CD4-positive, alpha-beta T cell (primary cell): ENCODE measurements at regions of chr11 and their contacts with region 1.

Region 1: DNA sequence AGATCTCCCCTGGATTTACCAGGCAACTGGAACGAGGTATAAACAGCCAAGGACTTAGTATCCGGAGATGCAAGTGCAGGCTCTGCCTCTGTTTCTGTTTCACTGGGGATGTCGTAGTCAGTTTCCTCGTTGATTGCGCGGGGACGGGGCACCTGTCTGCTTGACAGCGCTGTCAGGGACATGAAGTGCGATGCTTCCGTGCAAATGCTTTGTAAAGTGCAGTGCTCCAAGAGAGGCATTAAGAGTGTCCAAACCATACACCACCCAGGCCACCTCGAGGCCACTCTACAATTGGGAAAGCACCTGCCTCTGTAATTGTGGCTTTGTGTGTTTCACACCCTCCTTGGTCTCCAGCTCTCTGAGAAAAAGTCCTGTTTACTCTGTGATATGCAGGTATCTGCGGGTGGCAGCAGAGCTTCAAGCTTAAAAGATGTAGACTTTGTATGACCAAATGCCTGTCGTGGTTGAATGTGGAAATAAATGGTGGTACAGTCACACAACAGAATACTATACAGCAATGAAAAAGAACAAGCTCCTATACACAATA is 18.6 kb upstream of the CD5 start:
- DNase-seq: peak; percentile 56 to 92 (median 68)
- ATAC-seq: peak; percentile 67
- H3K4me3 ChIP-seq: peak overlapping the region; percentile 53
- H3K4me3 Mint-ChIP-seq: peak overlapping the region; percentile 89
- H3K27ac ChIP-seq: peak overlapping the region; percentile 90 to 94
- H3K27ac Mint-ChIP-seq: peak overlapping the region; percentile 98
- H3K4me1 ChIP-seq: peaks cover 54% of the 10 kb centered on the region
- H3K4me1 Mint-ChIP-seq: peaks cover 66% of the 10 kb centered on the region
- H3K27me3 ChIP-seq: no peaks in the 10 kb centered on the region
- H3K27me3 Mint-ChIP-seq: no peaks in the 10 kb centered on the region
- CTCF ChIP-seq: peak; percentile 36

Region 2: DNA sequence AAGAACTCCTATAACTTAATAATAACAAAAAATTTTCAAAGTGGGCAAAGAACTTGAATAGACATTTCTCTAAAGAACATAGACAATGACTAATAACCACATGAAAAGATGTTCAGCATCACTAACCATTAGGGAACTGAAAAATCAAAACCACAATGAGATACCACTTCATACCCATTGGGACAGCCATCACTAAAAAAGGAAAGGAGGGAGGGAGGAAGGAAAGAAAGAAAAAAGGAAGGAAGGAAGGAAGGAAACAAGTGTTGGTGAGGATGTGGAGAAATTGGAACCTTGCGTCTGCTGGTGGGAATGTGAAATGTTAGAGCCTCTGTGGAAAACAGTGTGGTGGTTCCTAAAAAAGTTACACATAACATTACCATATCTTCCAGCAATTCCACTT is 512.7 kb before region 1 on chr11:
- CTCF ChIA-PET with region 1: no interaction called
- POLR2A ChIA-PET with region 1: no interaction called
- intact Hi-C with region 1: no loop called
- DNase-seq: no peak
- ATAC-seq: no peak
- H3K4me3 ChIP-seq: no peak overlapping the region
- H3K4me3 Mint-ChIP-seq: no peak overlapping the region
- H3K27ac ChIP-seq: no peak overlapping the region
- H3K27ac Mint-ChIP-seq: no peak overlapping the region
- H3K4me1 ChIP-seq: no peaks in the 10 kb centered on the region
- H3K4me1 Mint-ChIP-seq: no peaks in the 10 kb centered on the region
- H3K27me3 ChIP-seq: peaks cover 0 to 8% of the 10 kb centered on the region in 2 experiments
- H3K27me3 Mint-ChIP-seq: peaks cover 12% of the 10 kb centered on the region
- CTCF ChIP-seq: no peak

Region 3: DNA sequence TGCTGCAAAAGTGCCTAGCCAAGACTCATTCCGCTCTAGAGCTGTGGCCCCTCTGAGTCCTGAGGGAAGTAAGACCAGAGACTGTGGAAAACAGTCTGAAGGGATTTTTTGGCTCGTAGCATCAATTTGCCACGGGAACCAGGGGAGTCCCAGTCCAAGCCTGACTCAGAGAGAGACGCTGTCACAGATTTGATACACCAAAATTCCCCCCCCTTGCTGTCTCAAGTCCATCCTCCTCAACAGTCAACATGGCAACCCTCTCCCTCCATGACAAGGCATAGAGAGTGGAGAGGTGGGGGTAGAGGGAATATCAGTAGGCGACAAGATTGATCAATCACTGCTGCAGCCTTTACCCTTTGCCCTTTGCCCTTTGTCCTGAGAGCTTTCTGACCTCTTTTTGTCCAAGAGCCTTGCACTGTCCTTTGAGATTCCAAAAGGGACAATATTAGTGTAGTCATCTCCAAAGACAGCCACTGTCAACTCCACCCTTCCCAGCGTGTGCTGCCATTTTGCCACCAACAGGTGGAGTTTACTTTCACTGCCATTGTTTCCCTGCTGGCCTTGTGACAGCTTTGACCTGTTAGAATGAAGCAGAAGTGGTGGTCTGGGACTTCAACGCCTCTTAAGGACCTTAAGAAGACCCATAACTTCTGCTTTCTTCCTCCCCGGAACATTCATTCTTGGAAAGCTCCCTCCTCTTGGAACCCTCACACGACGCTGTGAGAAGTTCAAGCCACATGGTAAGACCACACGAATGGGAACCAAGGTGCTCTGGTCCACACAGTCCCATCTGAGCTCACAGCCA is 139.0 kb before region 1 on chr11:
- CTCF ChIA-PET with region 1: no interaction called
- POLR2A ChIA-PET with region 1: no interaction called
- intact Hi-C with region 1: no loop called
- DNase-seq: peak in 2 of 14 experiments; percentile 45 to 48
- ATAC-seq: no peak
- H3K4me3 ChIP-seq: no peak overlapping the region
- H3K4me3 Mint-ChIP-seq: no peak overlapping the region
- H3K27ac ChIP-seq: no peak overlapping the region
- H3K27ac Mint-ChIP-seq: peak overlapping the region; percentile 17
- H3K4me1 ChIP-seq: no peaks in the 10 kb centered on the region
- H3K4me1 Mint-ChIP-seq: no peaks in the 10 kb centered on the region
- H3K27me3 ChIP-seq: peaks cover 0 to 4% of the 10 kb centered on the region in 2 experiments
- H3K27me3 Mint-ChIP-seq: no peaks in the 10 kb centered on the region
- CTCF ChIP-seq: peak; percentile 24

Region 4: GRCh38 chr11:60978546-60979380 is 104.9 kb before region 1 on chr11:
- CTCF ChIA-PET with region 1: no interaction called
- POLR2A ChIA-PET with region 1: interaction called, 22 read pairs
- intact Hi-C with region 1: no loop called
- DNase-seq: peak in 5 of 14 experiments; percentile 37 to 76 (median 71)
- ATAC-seq: peak; percentile 15
- H3K4me3 ChIP-seq: peak overlapping the region; percentile 27
- H3K4me3 Mint-ChIP-seq: peak overlapping the region; percentile 91
- H3K27ac ChIP-seq: peak overlapping the region; percentile 75 to 95
- H3K27ac Mint-ChIP-seq: peak overlapping the region; percentile 94
- H3K4me1 ChIP-seq: peaks cover 87% of the 10 kb centered on the region
- H3K4me1 Mint-ChIP-seq: peaks cover 87% of the 10 kb centered on the region
- H3K27me3 ChIP-seq: no peaks in the 10 kb centered on the region
- H3K27me3 Mint-ChIP-seq: no peaks in the 10 kb centered on the region
- CTCF ChIP-seq: no peak

Region 5: DNA sequence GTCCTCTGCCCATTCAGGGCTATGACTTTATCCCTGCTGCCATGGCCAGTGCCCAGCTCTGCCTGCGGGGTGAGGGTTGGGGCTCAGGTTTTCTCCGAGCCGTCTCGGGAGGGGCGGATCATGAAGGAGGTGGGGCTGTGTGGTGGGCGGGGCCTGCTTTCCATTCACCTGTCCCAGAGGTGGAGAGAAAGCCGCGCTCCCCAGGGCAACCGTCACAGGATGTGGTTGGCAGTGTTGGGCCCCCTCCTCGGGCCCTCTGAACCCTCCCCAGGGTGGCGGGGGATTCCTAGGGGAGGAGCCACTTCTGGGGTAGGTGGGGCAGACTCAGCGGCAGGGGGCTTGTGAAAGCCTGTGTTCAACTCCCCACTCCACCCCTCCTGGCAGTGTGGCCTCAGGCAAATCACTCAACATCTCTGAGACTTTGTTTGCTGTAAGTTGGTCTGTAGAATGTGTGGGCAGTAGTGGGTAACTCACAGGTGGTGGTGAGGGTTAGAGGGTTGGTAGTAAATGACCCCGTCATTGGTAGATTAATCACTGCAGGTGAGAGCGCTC is 61.9 kb before region 1 on chr11:
- CTCF ChIA-PET with region 1: interaction called, 4 read pairs
- POLR2A ChIA-PET with region 1: interaction called, 41 read pairs
- intact Hi-C with region 1: loop called (anchors 2 kb)
- DNase-seq: peak; percentile 82 to 97 (median 92)
- ATAC-seq: peak; percentile 71
- H3K4me3 ChIP-seq: peak overlapping the region; percentile 21
- H3K4me3 Mint-ChIP-seq: peak overlapping the region; percentile 87
- H3K27ac ChIP-seq: peak overlapping the region; percentile 81 to 88
- H3K27ac Mint-ChIP-seq: peak overlapping the region; percentile 99
- H3K4me1 ChIP-seq: peaks cover 85% of the 10 kb centered on the region
- H3K4me1 Mint-ChIP-seq: peaks cover 85% of the 10 kb centered on the region
- H3K27me3 ChIP-seq: no peaks in the 10 kb centered on the region
- H3K27me3 Mint-ChIP-seq: no peaks in the 10 kb centered on the region
- CTCF ChIP-seq: no peak

Region 6: DNA sequence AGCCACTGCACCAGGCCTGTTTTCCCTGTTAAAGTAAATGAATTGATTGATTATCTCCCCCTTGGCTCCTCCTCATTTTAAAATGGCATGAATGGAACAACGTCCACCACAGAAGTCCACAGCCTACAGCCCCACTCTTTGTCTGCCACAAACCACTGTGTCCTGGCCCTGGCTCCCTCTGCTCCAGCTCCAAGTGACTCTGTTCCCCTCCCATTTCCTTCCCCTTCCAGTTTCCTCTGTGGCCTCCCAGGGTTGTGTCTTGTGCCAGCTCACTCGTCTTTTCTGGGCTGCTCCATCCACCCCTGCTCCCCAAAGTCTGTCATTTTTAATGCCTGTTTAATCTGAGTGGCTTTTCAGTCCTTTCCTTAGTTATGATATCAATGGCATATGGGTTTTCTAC is 33.8 kb before region 1 on chr11:
- CTCF ChIA-PET with region 1: no interaction called
- POLR2A ChIA-PET with region 1: interaction called, 237 read pairs
- intact Hi-C with region 1: no loop called
- DNase-seq: no peak
- ATAC-seq: no peak
- H3K4me3 ChIP-seq: no peak overlapping the region
- H3K4me3 Mint-ChIP-seq: no peak overlapping the region
- H3K27ac ChIP-seq: no peak overlapping the region
- H3K27ac Mint-ChIP-seq: peak overlapping the region; percentile 81
- H3K4me1 ChIP-seq: peaks cover 44% of the 10 kb centered on the region
- H3K4me1 Mint-ChIP-seq: peaks cover 76% of the 10 kb centered on the region
- H3K27me3 ChIP-seq: no peaks in the 10 kb centered on the region
- H3K27me3 Mint-ChIP-seq: no peaks in the 10 kb centered on the region
- CTCF ChIP-seq: no peak

Region 7: GRCh38 chr11:61102667-61103571 is 19.2 kb after region 1 on chr11:
- CTCF ChIA-PET with region 1: interaction called, 4 read pairs
- POLR2A ChIA-PET with region 1: interaction called, 48 read pairs
- intact Hi-C with region 1: loop called in 1 of 2 experiments (anchors 2 kb)
- DNase-seq: peak in 4 of 14 experiments; percentile 47 to 78 (median 55)
- ATAC-seq: peak; percentile 22
- H3K4me3 ChIP-seq: peak overlapping the region; percentile 100
- H3K4me3 Mint-ChIP-seq: no peak overlapping the region
- H3K27ac ChIP-seq: peak overlapping the region; percentile 95 to 96
- H3K27ac Mint-ChIP-seq: no peak overlapping the region
- H3K4me1 ChIP-seq: peaks cover 58% of the 10 kb centered on the region
- H3K4me1 Mint-ChIP-seq: peaks cover 45% of the 10 kb centered on the region
- H3K27me3 ChIP-seq: no peaks in the 10 kb centered on the region
- H3K27me3 Mint-ChIP-seq: no peaks in the 10 kb centered on the region
- CTCF ChIP-seq: no peak

Region 8: GRCh38 chr11:61120706-61121191 is 37.1 kb after region 1 on chr11:
- CTCF ChIA-PET with region 1: no interaction called
- POLR2A ChIA-PET with region 1: interaction called, 116 read pairs
- intact Hi-C with region 1: no loop called
- DNase-seq: peak; percentile 43 to 92 (median 52)
- ATAC-seq: peak; percentile 86
- H3K4me3 ChIP-seq: no peak overlapping the region
- H3K4me3 Mint-ChIP-seq: peak overlapping the region; percentile 87
- H3K27ac ChIP-seq: peak overlapping the region; percentile 64 to 74
- H3K27ac Mint-ChIP-seq: peak overlapping the region; percentile 95
- H3K4me1 ChIP-seq: peaks cover 67% of the 10 kb centered on the region
- H3K4me1 Mint-ChIP-seq: peaks cover 72% of the 10 kb centered on the region
- H3K27me3 ChIP-seq: no peaks in the 10 kb centered on the region
- H3K27me3 Mint-ChIP-seq: no peaks in the 10 kb centered on the region
- CTCF ChIP-seq: no peak

Region 9: DNA sequence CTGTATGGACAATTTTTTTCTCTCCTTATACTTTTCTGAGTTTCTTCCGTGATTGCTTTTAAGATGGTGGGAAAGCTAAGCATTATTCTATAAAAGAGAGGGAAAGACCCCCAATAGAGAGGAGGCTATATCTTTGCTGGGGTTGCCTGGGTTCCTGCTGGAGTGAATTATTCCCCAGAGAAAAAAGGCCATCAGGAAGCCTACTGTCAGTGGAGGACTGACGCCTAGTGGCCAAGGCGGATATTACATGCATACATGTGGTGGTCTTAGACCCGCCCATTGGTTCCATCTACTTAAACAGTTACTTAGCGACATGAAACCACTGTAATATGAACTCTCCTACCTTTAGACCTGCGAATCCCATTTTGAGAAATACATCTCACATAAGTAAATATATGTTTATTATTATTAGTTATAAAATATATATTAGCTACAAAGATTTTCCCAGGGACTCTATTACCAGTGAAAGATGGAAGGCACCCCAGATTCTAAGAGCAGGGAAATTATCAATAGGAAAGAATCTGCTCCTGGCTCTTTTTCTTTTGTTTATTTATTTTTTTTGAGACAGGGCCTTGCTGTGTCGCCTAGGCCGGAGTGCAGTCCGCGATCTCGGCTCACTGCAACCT is 103.9 kb after region 1 on chr11:
- CTCF ChIA-PET with region 1: interaction called, 3 read pairs
- POLR2A ChIA-PET with region 1: no interaction called
- intact Hi-C with region 1: loop called in 1 of 2 experiments (anchors 5 kb)
- DNase-seq: peak; percentile 64 to 89 (median 75)
- ATAC-seq: peak; percentile 89
- H3K4me3 ChIP-seq: no peak overlapping the region
- H3K4me3 Mint-ChIP-seq: no peak overlapping the region
- H3K27ac ChIP-seq: no peak overlapping the region
- H3K27ac Mint-ChIP-seq: no peak overlapping the region
- H3K4me1 ChIP-seq: no peaks in the 10 kb centered on the region
- H3K4me1 Mint-ChIP-seq: no peaks in the 10 kb centered on the region
- H3K27me3 ChIP-seq: no peaks in the 10 kb centered on the region
- H3K27me3 Mint-ChIP-seq: peaks cover 3% of the 10 kb centered on the region
- CTCF ChIP-seq: peak; percentile 99